Adrenal gland (tissue), 19 donors: ENCODE measurements at regions of chr11 and their contacts with region 1.

Region 1: DNA sequence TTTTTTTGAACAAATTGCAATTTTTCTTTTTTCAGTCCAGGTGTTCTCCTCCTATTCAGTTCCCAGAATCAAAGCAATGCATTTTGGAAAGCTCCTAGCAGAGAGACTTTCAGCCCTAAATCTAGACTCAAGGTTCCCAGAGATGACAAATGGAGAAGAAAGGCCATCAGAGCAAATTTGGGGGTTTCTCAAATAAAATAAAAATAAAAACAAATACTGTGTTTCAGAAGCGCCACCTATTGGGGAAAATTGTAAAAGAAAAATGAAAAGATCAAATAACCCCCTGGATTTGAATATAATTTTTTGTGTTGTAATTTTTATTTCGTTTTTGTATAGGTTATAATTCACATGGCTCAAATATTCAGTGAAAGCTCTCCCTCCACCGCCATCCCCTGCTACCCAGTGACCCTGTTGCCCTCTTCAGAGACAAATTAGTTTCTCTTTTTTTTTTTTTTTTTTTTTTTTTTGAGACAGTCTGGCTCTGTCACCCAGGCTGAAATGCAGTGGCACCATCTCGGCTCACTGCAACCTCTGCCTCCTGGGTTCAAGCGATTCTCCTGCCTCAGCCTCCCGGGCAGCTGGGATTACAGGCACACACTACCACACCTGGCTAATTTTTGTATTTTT is 6.2 kb upstream of the UBE4A start:
- DNase-seq: no peak
- H3K4me3 ChIP-seq: no peak overlapping the region
- H3K27ac ChIP-seq: no peak overlapping the region
- H3K4me1 ChIP-seq: no peaks in the 10 kb centered on the region
- H3K27me3 ChIP-seq: no peaks in the 10 kb centered on the region
- CTCF ChIP-seq: peak; percentile 31 to 65 (median 56)
- POLR2A ChIP-seq: no peak

Region 2: DNA sequence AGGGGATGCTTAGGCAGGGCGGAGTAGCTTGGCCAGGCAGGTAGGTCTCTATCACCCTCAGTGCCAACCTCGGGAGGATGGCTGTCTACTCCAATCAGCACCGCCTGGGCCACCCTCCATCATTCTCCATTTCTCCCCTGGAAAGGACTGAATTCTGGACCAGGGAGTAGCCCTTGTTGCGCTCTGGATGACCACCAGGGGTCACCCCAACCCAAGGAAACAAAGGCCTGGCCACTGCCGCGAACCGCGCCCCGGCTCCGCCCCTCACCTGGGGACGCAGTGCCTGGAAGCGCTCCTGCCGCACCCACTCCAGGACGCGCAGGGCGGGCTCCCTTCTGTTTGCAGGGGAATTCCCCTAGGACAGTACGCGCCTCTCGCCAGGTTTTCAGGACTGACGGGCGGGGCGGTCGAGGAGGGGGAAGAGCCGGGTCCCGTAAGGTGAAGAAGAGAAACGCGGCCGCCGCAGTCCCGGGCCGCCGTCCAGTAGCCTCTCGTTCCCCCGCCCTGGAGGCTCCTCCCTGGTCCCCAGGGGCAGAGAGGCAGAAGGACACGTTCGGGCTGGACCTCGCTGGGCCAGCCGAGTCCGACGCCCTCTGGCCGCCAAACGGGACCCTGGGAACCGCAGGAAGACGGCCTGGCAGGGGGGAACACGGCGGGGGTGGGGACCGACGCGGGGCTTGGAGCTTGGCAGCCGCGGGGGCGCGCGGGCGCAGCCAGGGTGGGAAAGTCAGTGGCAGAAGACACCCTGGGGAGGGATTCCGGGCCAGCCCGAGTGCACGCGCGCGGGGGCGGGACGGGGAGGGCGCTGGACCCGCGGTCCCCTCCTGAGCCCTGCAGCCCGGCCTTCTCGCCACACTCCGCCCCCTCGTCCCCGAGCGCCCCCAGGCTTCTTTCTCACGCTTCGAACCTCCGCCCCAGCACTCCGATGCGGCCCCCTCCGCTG is 207.6 kb before region 1 on chr11:
- intact Hi-C with region 1: loop called in 1 of 2 experiments (anchors 5 kb)
- DNase-seq: peak; percentile 68 to 91 (median 82)
- H3K4me3 ChIP-seq: peak overlapping the region in 3 of 4 donors; percentile 13 to 48 (median 35)
- H3K27ac ChIP-seq: no peak overlapping the region
- H3K4me1 ChIP-seq: no peaks in the 10 kb centered on the region
- H3K27me3 ChIP-seq: peaks cover 21% of the 10 kb centered on the region
- CTCF ChIP-seq: peak; percentile 87 to 95 (median 92)
- POLR2A ChIP-seq: no peak

Region 3: DNA sequence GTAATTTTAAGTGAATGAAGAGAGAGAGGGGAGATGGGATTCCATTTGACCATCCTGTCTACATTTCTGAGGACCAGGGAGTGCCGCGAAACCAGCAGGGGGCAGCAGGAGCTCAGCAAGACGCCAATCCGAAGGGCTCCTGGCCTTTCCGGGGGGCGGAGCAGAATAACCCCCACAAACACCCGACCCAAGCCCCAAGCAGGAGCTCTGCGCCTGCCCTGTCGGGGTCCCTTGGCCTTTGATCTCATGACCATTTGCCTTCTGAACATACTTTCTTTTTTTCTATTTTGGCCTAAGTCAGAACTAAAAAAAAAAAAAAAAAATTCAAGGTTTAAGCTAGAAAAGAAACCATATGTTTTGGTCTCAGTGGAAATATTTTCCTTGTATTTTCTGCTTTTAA is 154.8 kb before region 1 on chr11:
- intact Hi-C with region 1: loop called (anchors 2 to 5 kb)
- DNase-seq: peak; percentile 67 to 84 (median 71)
- H3K4me3 ChIP-seq: no peak overlapping the region
- H3K27ac ChIP-seq: no peak overlapping the region
- H3K4me1 ChIP-seq: peaks cover 0 to 10% of the 10 kb centered on the region in 2 donors
- H3K27me3 ChIP-seq: no peaks in the 10 kb centered on the region
- CTCF ChIP-seq: peak; percentile 64 to 87 (median 80)
- POLR2A ChIP-seq: no peak